Endothelial cell of umbilical vein (primary cell): ENCODE measurements at regions of chr2 and their contacts with region 1.

Region 1: GRCh38 chr2:225660262-225661131 is 261.0 kb downstream of the NYAP2 start:
- DNase-seq: peak; percentile 55
- H3K4me3 ChIP-seq: no peak overlapping the region
- H3K27ac ChIP-seq: no peak overlapping the region
- H3K4me1 ChIP-seq: no peaks in the 10 kb centered on the region
- H3K27me3 ChIP-seq: peaks cover 0 to 2% of the 10 kb centered on the region in 2 experiments
- CTCF ChIP-seq: peak; percentile 81 to 82
- POLR2A ChIP-seq: no peak

Region 2: DNA sequence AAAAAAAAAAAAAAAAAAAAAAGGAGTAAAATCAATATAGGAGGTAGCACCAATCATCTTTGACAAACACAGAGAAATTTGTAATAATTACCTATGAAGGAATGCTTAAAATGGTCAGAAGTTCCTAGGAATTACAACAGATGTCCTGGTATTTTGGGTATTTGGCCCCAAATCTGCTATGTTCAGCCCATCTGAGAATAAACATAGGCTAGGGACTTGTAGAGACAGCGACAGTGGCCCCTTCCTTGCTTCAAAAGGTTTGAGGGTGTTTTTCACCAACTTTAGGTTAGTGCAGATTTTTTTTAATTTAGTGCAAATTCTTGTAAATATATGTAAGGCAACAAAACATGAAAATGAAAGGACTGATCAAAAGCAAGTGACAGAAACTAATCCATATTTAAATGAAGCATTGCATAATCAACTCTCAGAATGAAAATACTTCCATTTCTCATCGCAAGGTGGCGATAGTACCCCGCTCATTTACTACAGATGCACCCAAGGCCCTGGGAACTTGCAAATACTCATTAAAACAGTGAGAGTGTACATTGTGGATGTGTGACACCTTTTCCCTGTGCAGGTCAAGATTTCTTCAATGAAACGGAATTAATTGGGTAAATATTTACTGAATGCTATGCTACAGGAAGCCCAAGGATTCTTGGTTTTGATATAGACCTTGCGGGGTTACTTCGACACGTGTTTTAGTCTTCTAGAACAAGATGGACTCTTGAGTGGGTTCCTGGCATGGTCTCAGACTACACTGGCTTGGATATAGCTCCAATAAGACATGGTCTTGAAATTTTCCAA is 1303.2 kb before region 1 on chr2:
- CTCF ChIA-PET with region 1: interaction called, 5 read pairs
- POLR2A ChIA-PET with region 1: no interaction called
- dilution Hi-C with region 1: no loop called
- intact Hi-C with region 1: loop called (anchors 1 kb)
- DNase-seq: peak; percentile 82
- H3K4me3 ChIP-seq: no peak overlapping the region
- H3K27ac ChIP-seq: no peak overlapping the region
- H3K4me1 ChIP-seq: no peaks in the 10 kb centered on the region
- H3K27me3 ChIP-seq: peaks cover 0 to 3% of the 10 kb centered on the region in 2 experiments
- CTCF ChIP-seq: peak; percentile 44 to 68
- POLR2A ChIP-seq: no peak

Region 3: DNA sequence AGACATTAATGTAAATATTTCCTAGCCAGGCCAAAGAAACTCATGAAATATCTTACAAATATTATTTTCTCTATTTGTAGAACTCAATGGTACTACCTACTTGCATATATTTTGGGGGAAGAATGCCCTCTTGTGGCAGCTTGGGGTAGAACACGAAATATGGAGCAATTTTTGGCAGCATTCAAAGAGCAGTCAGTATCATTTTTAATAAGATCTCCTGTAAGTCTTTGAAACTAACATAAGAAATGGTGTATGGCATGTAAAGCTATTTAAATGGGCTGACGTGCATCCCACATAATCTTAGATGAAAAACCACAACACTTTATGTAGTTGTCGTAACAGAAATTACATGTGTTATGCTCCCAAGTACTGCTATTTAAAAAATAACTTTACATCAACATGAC is 882.0 kb before region 1 on chr2:
- CTCF ChIA-PET with region 1: no interaction called
- POLR2A ChIA-PET with region 1: no interaction called
- dilution Hi-C with region 1: no loop called
- intact Hi-C with region 1: loop called (anchors 10 kb)
- DNase-seq: peak; percentile 83
- H3K4me3 ChIP-seq: no peak overlapping the region
- H3K27ac ChIP-seq: no peak overlapping the region
- H3K4me1 ChIP-seq: no peaks in the 10 kb centered on the region
- H3K27me3 ChIP-seq: no peaks in the 10 kb centered on the region
- CTCF ChIP-seq: peak; percentile 55 to 61
- POLR2A ChIP-seq: no peak

Region 4: GRCh38 chr2:225122583-225123486 is 537.7 kb before region 1 on chr2:
- CTCF ChIA-PET with region 1: interaction called, 13 read pairs
- POLR2A ChIA-PET with region 1: no interaction called
- dilution Hi-C with region 1: no loop called
- intact Hi-C with region 1: loop called (anchors 1 kb)
- DNase-seq: peak; percentile 15
- H3K4me3 ChIP-seq: no peak overlapping the region
- H3K27ac ChIP-seq: no peak overlapping the region
- H3K4me1 ChIP-seq: no peaks in the 10 kb centered on the region
- H3K27me3 ChIP-seq: peaks cover 0 to 2% of the 10 kb centered on the region in 2 experiments
- CTCF ChIP-seq: peak; percentile 21 to 27
- POLR2A ChIP-seq: no peak

Region 5: DNA sequence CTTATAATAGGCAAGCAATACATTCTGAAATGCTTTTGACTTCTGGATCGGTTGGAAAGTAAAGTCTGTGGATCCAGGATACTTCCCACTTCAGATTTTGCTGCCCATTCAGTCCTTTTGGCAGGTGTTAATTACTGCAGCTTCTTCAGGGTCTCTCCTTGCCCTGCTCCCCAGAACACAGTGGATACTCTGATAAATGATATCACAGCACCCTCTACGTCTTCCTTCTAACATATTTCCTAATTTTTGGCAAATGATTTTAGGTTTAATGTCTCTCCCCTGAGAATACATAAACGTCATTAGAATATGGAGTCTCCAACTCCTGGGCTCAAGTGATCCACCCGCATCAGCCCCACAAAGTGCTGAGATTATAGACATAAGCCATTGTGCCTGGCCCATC is 11.2 kb before region 1 on chr2:
- CTCF ChIA-PET with region 1: interaction called, 10 read pairs
- POLR2A ChIA-PET with region 1: no interaction called
- dilution Hi-C with region 1: no loop called
- intact Hi-C with region 1: no loop called
- DNase-seq: no peak
- H3K4me3 ChIP-seq: no peak overlapping the region
- H3K27ac ChIP-seq: no peak overlapping the region
- H3K4me1 ChIP-seq: no peaks in the 10 kb centered on the region
- H3K27me3 ChIP-seq: no peaks in the 10 kb centered on the region
- CTCF ChIP-seq: no peak
- POLR2A ChIP-seq: no peak

Region 6: GRCh38 chr2:225820826-225821225 is 160.3 kb after region 1 on chr2:
- CTCF ChIA-PET with region 1: no interaction called
- POLR2A ChIA-PET with region 1: no interaction called
- dilution Hi-C with region 1: no loop called
- intact Hi-C with region 1: no loop called
- DNase-seq: no peak
- H3K4me3 ChIP-seq: no peak overlapping the region
- H3K27ac ChIP-seq: no peak overlapping the region
- H3K4me1 ChIP-seq: no peaks in the 10 kb centered on the region
- H3K27me3 ChIP-seq: no peaks in the 10 kb centered on the region
- CTCF ChIP-seq: no peak
- POLR2A ChIP-seq: no peak

Region 7: GRCh38 chr2:226984750-226985582 is 1324.5 kb after region 1 on chr2:
- CTCF ChIA-PET with region 1: interaction called, 52 read pairs
- POLR2A ChIA-PET with region 1: no interaction called
- dilution Hi-C with region 1: no loop called
- intact Hi-C with region 1: no loop called
- DNase-seq: peak; percentile 57
- H3K4me3 ChIP-seq: no peak overlapping the region
- H3K27ac ChIP-seq: no peak overlapping the region
- H3K4me1 ChIP-seq: no peaks in the 10 kb centered on the region
- H3K27me3 ChIP-seq: no peaks in the 10 kb centered on the region
- CTCF ChIP-seq: peak; percentile 32 to 42
- POLR2A ChIP-seq: no peak

Region 8: GRCh38 chr2:227238238-227239237 is 1578.0 kb after region 1 on chr2:
- CTCF ChIA-PET with region 1: interaction called, 33 read pairs
- POLR2A ChIA-PET with region 1: no interaction called
- dilution Hi-C with region 1: no loop called
- intact Hi-C with region 1: loop called (anchors 5 kb)
- DNase-seq: peak; percentile 62
- H3K4me3 ChIP-seq: no peak overlapping the region
- H3K27ac ChIP-seq: no peak overlapping the region
- H3K4me1 ChIP-seq: no peaks in the 10 kb centered on the region
- H3K27me3 ChIP-seq: no peaks in the 10 kb centered on the region
- CTCF ChIP-seq: peak; percentile 86 to 95
- POLR2A ChIP-seq: no peak